CD8-positive, alpha-beta T cell (primary cell): ENCODE measurements at regions of chr12 and their contacts with region 1.

Region 1: DNA sequence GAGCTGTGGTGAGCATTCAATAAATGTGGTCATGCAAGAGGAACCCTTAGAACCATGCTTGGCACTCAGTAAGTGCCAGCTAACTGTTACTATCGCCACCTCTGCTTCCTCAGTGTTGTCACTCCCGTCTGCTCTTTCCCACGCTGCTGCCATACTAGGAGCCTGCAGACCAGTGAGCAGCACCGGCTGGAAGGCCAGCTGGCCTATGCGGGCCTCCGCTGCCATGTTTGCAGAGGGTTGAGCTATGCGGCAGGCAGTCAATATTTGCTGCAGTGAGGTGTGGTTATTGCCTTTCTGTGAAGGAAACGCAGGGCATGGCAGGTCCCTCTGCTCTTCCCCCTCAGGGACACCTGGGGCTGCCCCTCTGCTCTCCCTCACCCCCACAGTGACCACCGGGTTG is 13.0 kb downstream of the KMT5A start:
- DNase-seq: no peak
- ATAC-seq: no peak
- H3K4me3 ChIP-seq: no peak overlapping the region
- H3K4me3 Mint-ChIP-seq: no peak overlapping the region
- H3K27ac ChIP-seq: no peak overlapping the region
- H3K27ac Mint-ChIP-seq: no peak overlapping the region
- H3K4me1 ChIP-seq: no peaks in the 10 kb centered on the region
- H3K4me1 Mint-ChIP-seq: peaks cover 9% of the 10 kb centered on the region
- H3K27me3 ChIP-seq: no peaks in the 10 kb centered on the region
- H3K27me3 Mint-ChIP-seq: no peaks in the 10 kb centered on the region
- CTCF ChIP-seq: no peak

Region 2: DNA sequence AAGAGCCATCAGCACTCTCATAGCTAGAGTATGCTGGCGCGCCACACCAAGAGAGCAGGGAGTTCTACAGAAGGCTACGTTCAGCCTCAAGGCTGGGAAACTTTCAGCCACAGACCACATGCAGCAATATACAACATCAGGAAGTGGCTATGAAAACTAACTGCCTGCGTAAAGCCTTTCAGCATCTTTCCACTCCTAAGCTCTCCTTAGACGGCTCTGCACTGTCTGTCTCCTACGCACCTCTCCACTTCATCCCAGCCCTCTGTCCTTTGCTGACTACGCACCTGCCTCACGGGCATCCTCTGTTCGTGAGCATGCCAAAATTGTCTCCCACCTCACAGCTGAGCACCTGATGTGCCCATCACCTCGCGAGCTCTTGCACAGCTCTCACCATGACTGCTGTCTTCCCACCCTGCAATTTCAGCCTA is 173.7 kb before region 1 on chr12:
- CTCF ChIA-PET with region 1: no interaction called
- POLR2A ChIA-PET with region 1: no interaction called
- intact Hi-C with region 1: no loop called
- DNase-seq: peak; percentile 21 to 90 (median 61)
- ATAC-seq: peak; percentile 90
- H3K4me3 ChIP-seq: peak overlapping the region; percentile 33 to 34
- H3K4me3 Mint-ChIP-seq: peak overlapping the region; percentile 74
- H3K27ac ChIP-seq: peak overlapping the region; percentile 70 to 74
- H3K27ac Mint-ChIP-seq: peak overlapping the region; percentile 93
- H3K4me1 ChIP-seq: peaks cover 35% of the 10 kb centered on the region
- H3K4me1 Mint-ChIP-seq: peaks cover 31% of the 10 kb centered on the region
- H3K27me3 ChIP-seq: no peaks in the 10 kb centered on the region
- H3K27me3 Mint-ChIP-seq: no peaks in the 10 kb centered on the region
- CTCF ChIP-seq: no peak

Region 3: GRCh38 chr12:123428591-123428990 is 31.6 kb after region 1 on chr12:
- CTCF ChIA-PET with region 1: no interaction called
- POLR2A ChIA-PET with region 1: no interaction called
- intact Hi-C with region 1: loop called in 1 of 2 experiments (anchors 2 kb)
- DNase-seq: no peak
- ATAC-seq: no peak
- H3K4me3 ChIP-seq: no peak overlapping the region
- H3K4me3 Mint-ChIP-seq: no peak overlapping the region
- H3K27ac ChIP-seq: peak overlapping the region in 1 of 2 experiments; percentile 77
- H3K27ac Mint-ChIP-seq: peak overlapping the region; percentile 73
- H3K4me1 ChIP-seq: peaks cover 22% of the 10 kb centered on the region
- H3K4me1 Mint-ChIP-seq: peaks cover 35% of the 10 kb centered on the region
- H3K27me3 ChIP-seq: no peaks in the 10 kb centered on the region
- H3K27me3 Mint-ChIP-seq: no peaks in the 10 kb centered on the region
- CTCF ChIP-seq: no peak